ENCODE measurements at regions of chr15 and their contacts with region 1.

Region 1: GRCh38 chr15:38624244-38625205 is 59.9 kb upstream of the RASGRP1 start:
- DNase-seq: no peak

Region 2: DNA sequence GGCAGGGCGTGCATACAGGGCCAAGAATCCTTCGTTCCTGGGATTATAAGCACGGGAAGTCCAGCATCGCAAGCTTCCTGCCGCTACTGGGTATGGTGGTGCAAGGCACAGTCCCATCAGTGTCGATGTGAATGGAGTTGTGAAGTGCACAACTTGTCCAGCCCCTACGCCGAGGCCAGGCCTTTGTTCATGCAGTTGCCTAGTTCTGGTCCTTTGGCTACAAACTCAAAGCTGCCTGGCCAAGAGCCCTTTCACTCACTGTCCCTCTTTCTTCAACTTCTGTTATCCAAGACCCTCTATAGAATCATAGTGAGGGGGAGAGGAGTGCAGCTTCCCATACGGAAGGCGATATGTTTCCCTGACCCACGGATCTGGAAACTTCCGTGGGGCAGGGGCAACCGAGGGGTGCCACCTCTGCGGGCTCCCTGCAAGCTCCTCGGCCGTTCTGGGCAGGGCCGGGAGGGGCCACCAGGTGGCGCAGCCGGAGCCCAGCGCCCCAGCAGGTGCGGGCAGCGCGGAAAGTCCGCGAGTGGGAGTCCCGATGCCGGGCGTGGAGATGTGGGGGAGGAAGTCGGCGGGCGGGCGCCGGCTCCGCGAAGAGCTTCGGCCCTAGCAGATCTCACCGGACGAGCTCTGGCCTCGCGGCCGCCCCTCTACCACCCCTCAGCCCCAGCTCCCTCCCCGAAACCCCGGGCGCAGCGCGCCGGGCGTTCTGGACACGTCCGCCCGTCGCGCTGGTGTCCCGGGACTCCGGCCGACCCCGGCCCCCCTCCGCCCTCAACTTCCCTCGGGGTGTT is 60.6 kb before region 1 on chr15:
- intact Hi-C with region 1: loop called (anchors 10 kb)
- DNase-seq: peak; percentile 58 to 96 (median 78)

Region 3: GRCh38 chr15:38647683-38648082 is 23.2 kb after region 1 on chr15:
- intact Hi-C with region 1: no loop called
- DNase-seq: no peak

Region 4: DNA sequence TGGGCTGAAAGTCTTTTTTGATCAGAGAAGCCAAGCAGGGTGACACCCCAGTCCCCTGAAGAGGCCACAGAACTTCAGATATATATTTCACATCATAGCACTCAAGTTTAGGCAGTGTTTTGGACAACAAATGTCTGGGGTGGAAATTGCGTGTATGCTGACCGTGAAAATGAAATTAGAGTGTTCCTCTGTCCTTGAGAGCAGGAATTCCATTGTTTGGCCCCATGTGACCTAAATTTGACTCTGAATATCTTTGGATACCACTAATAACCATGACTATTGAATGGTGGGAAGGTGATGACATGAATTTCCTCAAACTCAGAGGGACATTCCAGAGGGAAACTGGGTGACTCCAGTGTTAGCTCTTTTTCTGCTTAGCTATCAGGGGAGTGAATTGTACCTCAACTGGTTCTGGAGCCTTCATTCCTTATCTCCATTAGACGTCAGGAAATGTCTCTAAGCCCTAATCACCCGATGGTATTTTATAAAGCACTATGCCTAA is 203.6 kb after region 1 on chr15:
- intact Hi-C with region 1: no loop called
- DNase-seq: no peak